IMR-90 (cell line): ENCODE measurements at regions of chr1 and their contacts with region 1.

Region 1: DNA sequence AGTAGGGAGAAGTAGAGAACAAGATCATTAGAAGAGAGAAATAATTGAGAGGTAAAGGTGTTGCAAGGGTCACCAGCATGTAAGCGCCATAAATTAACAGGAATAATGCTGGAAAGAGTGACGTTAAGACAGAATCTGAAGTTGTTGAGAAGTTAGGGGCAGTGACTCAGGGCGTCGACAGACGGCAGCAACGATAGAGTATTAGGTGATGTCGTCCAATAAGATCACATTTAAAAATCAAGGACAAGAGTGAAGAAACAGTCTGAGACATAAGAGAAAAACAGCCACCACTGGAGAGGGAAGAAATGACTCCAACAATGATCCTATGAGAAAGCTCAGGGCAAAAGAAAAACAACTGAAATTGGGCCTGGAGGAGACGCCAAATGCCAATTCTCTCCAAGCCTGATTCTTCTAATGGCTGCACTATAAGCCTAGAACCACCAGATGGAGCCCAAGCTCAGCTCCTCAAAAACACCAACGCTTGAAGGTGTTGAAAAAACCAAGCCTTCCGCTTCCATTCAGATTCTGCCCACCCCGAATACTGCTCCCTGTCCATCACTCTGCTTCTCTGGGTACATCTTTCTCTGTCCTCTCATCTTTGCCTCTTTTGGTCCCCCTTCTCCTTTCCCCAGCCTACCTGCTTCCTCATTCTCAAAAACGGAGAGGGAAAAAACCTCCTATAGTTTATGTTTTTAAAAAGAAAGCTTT is 70.0 kb downstream of the LUZP1 start:
- DNase-seq: peak; percentile 77
- ATAC-seq: peak; percentile 59
- H3K4me3 ChIP-seq: no peak overlapping the region
- H3K27ac ChIP-seq: no peak overlapping the region
- H3K4me1 ChIP-seq: peaks cover 18% of the 10 kb centered on the region
- H3K27me3 ChIP-seq: no peaks in the 10 kb centered on the region
- CTCF ChIP-seq: peak; percentile 98
- POLR2A ChIP-seq: peak; percentile 54
- RAD21 ChIP-seq: peak; percentile 98

Region 2: DNA sequence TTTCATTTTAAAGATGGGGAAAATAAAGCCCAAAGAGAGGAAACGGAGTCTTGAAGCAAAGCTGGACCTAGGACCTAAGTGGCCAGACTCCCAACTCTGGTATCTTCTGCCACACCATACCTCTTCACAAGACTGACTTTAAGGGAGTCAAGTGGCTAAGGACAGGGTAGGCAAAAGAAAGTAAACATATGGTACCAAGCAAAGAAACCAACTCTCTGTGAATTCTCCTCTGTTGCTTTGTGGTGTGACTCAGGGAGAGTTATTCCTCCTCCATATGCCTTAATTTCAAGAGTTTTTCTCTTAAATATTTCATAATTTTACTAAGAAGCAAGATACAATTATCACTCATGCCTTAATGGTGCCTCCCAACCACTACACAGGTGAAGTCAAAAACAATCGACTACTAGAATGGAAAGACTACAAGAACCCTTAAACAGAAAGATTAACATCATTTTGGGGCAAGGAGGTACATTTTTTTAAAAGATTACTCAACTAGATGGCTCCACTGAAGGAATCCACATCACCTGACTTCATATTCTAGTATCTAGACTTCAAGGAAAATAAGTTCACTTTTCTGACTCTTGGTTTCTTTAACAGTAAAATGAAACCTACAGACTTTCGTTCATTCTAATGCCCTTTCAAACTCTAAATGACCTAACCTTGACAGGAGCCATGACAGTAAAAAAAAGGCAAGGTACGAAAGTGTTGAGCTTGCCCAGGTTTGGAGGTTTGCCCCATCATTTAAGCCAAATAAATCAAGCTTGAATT is 25.8 kb after region 1 on chr1:
- CTCF ChIA-PET with region 1: no interaction called
- POLR2A ChIA-PET with region 1: no interaction called
- dilution Hi-C with region 1: no loop called
- in situ Hi-C with region 1: no loop called
- intact Hi-C with region 1: loop called (anchors 1 kb)
- DNase-seq: no peak
- ATAC-seq: no peak
- H3K4me3 ChIP-seq: no peak overlapping the region
- H3K27ac ChIP-seq: no peak overlapping the region
- H3K4me1 ChIP-seq: peaks cover 19% of the 10 kb centered on the region
- H3K27me3 ChIP-seq: no peaks in the 10 kb centered on the region
- CTCF ChIP-seq: no peak
- POLR2A ChIP-seq: no peak
- RAD21 ChIP-seq: no peak

Region 3: DNA sequence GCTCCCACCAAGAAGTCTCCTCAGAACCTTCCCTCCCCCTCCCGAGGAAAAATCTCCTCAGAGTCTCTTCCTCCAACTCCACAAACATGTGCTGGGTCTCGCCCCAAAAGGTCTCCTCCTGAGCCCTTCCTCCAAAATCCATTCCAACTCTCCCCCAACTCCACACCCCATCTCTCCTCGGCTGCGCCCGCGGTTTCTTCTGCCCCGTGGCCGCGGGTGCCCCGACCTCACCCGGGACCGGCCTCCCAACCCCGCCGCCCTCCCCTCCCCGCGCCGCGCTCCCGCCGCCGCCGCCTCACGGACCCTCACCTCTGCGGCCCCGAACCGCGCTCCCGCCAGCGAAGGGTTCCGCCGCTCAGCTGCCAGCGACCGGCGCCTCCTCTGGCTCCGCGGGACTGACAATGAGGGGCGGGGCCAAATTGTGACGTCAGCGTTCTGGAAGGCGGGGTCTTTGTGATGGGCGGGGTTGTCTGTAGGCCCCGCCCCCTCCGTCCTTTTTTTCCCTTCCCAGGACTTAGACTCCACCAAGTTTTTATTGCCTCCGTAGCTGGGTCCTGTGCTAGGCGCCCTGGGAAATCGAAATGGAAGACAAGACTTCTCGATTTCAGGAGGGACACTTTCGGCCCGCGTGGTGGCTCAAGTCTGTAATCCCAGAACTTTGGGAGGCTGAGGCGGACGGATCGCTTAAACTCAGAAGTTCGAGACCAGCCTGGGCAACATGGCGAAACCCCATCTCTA is 70.0 kb after region 1 on chr1 and contains the start of gene LUZP1:
- CTCF ChIA-PET with region 1: interaction called, 3 read pairs
- POLR2A ChIA-PET with region 1: no interaction called
- dilution Hi-C with region 1: no loop called
- in situ Hi-C with region 1: no loop called
- intact Hi-C with region 1: loop called (anchors 1 kb)
- DNase-seq: peak; percentile 86
- ATAC-seq: peak; percentile 81
- H3K4me3 ChIP-seq: peak within 1 kb of the TSS; percentile 93
- H3K27ac ChIP-seq: peak within 1 kb of the TSS; percentile 97
- H3K4me1 ChIP-seq: peaks cover 7% of the 10 kb centered on the region
- H3K27me3 ChIP-seq: no peaks in the 10 kb centered on the region
- CTCF ChIP-seq: 0 out of 2 replicates have a peak, but pooled peaks have one; percentile 2
- POLR2A ChIP-seq: peak; percentile 96
- RAD21 ChIP-seq: no peak
- total RNA-seq, gene LUZP1: 31.7 and 36.1 TPM in 2 replicates

Region 4: DNA sequence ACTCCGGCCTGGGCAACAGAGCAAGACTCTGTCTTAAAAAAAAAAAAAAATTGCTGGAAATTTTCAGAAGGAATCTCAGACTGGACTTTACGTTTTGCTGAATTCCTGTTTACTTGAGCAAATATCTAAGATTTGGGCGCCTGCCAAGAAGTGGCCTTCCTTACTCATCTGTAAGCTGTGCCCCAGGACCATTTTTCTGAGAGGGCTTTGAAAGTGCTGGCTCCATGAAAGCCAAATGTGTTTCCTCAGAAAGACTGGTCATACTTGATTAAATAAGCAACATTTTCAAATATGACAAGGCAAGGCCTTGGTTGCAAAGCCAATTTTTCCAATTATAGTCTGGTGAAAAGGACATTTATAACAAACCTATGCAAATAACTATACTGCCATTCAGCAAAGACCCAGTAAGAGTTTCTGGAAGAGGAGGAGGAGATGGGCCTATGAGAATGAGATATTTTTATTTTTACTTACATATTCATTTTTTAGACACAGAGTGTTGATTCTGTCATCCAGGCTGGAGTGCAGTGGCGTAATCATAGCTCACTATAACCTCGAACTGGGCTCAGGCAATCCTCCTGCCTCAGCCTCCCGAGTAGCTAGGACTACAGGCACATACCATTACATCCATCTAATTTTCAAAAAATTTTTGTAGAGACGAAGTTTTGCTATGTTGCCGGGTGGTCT is 175.0 kb after region 1 on chr1:
- CTCF ChIA-PET with region 1: no interaction called
- POLR2A ChIA-PET with region 1: no interaction called
- dilution Hi-C with region 1: no loop called
- in situ Hi-C with region 1: no loop called
- intact Hi-C with region 1: loop called (anchors 5 kb)
- DNase-seq: peak; percentile 95
- ATAC-seq: peak; percentile 89
- H3K4me3 ChIP-seq: no peak overlapping the region
- H3K27ac ChIP-seq: peak overlapping the region; percentile 12; the same call in 1 of the 2 replicates
- H3K4me1 ChIP-seq: no peaks in the 10 kb centered on the region; the same call in 1 of the 2 replicates
- H3K27me3 ChIP-seq: no peaks in the 10 kb centered on the region
- CTCF ChIP-seq: no peak
- POLR2A ChIP-seq: no peak
- RAD21 ChIP-seq: no peak

Region 5: DNA sequence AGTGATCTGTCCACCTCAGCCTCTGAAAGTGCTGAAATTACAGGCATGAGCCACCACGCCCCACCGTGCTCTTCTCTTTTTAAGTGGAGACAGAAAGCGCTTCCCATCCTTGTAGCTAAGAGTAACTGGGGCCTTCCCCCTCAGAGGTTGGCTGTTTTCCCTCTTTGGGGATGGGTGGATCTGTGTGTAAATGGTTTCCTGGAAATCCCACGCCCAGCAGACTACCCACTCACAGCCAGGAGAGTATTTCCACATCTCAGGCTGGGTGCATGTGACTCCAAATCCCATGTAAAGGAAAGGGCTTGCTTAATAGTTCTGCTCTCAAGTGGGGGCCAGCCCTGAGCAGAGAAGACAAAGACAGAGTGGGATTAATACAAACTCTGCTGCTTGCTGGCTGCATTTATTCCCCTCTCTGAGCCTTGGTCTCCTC is 345.5 kb after region 1 on chr1:
- CTCF ChIA-PET with region 1: no interaction called
- POLR2A ChIA-PET with region 1: no interaction called
- dilution Hi-C with region 1: no loop called
- in situ Hi-C with region 1: no loop called
- intact Hi-C with region 1: no loop called
- DNase-seq: peak; percentile 72
- ATAC-seq: peak; percentile 64
- H3K4me3 ChIP-seq: no peak overlapping the region
- H3K27ac ChIP-seq: peak overlapping the region; percentile 68; the same call in 1 of the 2 replicates
- H3K4me1 ChIP-seq: peaks cover 2% of the 10 kb centered on the region; the same call in 1 of the 2 replicates
- H3K27me3 ChIP-seq: no peaks in the 10 kb centered on the region
- CTCF ChIP-seq: no peak
- POLR2A ChIP-seq: no peak
- RAD21 ChIP-seq: no peak